Calu3 (cell line): ENCODE measurements at regions of chr14 and their contacts with region 1.

Region 1: DNA sequence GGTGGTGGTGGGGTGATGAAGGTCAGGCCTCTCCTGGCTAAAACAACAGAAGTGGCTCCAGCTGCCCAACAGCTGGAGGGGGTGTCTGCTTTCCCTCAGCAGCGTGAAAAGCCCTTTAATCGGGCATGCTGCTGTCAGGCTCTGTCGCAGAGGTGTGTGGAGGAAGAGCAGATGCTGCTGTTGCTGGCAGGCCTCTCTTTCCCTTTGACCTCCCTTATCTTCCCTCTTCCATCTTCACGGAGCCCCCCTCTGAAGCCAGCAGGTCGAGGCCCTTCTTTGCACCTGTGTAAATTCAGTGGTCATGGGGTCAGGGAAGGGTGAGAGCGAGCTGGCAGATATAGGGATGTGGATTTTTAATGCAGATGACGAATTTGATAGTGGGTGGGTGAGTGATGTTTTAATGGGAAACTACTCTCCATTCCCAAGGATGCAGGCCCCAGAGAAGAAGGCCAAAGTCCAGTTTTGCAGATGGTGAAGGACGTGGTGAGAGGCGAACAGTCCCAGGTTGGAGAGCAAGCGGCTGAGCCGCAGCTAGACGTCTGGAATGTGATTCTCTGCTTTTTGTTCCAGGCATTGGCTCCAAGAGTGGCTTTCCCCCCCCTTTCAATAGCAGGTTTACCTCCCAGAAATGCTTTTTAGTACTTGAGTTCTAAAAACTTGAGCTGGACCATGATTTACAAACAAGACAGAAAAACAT is 64.0 kb downstream of the SMOC1 start:
- DNase-seq: peak; percentile 9
- H3K4me3 Mint-ChIP-seq: peak overlapping the region; percentile 39
- H3K27ac Mint-ChIP-seq: peak overlapping the region; percentile 73
- H3K4me1 Mint-ChIP-seq: peaks cover 75% of the 10 kb centered on the region
- H3K27me3 Mint-ChIP-seq: no peaks in the 10 kb centered on the region
- CTCF ChIP-seq: no peak

Region 2: DNA sequence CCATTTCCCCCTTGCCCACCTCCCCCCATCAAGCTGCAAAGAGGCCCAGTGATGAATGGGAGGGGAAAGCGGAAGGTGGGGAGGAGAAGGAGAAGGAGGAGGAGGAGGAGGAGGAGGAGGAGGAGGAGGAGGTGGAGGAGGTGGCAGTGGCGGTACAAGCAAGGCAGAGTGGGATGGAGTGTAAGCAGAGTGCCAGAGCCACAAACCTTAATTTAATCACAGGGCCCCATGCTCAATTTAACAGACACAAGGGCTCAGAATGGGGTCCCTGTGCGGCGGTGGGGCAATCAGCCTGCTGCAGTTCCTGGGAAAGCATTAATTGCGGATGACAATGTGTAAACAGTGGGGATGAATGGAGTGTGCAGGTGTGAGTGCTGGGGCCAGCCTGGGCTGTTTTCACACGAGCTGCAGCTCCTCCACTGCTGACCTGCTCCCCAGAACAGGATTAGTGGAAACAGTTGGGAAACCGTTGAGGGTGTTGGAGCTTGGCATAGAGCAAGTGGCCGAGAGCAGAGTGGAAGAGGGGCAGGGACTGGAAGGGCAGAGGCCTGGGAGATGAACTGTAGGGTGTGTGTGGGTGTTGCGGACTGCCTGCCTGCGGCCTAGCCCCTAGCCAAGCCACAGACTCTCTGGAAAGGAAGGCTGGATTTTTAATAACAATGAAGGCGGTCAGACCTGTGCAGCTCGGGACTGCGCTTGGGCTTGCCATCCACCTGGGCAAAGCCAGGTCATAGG is 100.4 kb before region 1 on chr14:
- CTCF ChIA-PET with region 1: no interaction called
- intact Hi-C with region 1: no loop called
- DNase-seq: no peak
- H3K4me3 Mint-ChIP-seq: no peak overlapping the region
- H3K27ac Mint-ChIP-seq: no peak overlapping the region
- H3K4me1 Mint-ChIP-seq: no peaks in the 10 kb centered on the region
- H3K27me3 Mint-ChIP-seq: no peaks in the 10 kb centered on the region
- CTCF ChIP-seq: no peak

Region 3: GRCh38 chr14:69887740-69888657 is 55.2 kb before region 1 on chr14:
- CTCF ChIA-PET with region 1: no interaction called
- intact Hi-C with region 1: loop called (anchors 2 kb)
- DNase-seq: peak; percentile 36
- H3K4me3 Mint-ChIP-seq: peak overlapping the region; percentile 24
- H3K27ac Mint-ChIP-seq: peak overlapping the region; percentile 56
- H3K4me1 Mint-ChIP-seq: peaks cover 43% of the 10 kb centered on the region
- H3K27me3 Mint-ChIP-seq: no peaks in the 10 kb centered on the region
- CTCF ChIP-seq: no peak

Region 4: DNA sequence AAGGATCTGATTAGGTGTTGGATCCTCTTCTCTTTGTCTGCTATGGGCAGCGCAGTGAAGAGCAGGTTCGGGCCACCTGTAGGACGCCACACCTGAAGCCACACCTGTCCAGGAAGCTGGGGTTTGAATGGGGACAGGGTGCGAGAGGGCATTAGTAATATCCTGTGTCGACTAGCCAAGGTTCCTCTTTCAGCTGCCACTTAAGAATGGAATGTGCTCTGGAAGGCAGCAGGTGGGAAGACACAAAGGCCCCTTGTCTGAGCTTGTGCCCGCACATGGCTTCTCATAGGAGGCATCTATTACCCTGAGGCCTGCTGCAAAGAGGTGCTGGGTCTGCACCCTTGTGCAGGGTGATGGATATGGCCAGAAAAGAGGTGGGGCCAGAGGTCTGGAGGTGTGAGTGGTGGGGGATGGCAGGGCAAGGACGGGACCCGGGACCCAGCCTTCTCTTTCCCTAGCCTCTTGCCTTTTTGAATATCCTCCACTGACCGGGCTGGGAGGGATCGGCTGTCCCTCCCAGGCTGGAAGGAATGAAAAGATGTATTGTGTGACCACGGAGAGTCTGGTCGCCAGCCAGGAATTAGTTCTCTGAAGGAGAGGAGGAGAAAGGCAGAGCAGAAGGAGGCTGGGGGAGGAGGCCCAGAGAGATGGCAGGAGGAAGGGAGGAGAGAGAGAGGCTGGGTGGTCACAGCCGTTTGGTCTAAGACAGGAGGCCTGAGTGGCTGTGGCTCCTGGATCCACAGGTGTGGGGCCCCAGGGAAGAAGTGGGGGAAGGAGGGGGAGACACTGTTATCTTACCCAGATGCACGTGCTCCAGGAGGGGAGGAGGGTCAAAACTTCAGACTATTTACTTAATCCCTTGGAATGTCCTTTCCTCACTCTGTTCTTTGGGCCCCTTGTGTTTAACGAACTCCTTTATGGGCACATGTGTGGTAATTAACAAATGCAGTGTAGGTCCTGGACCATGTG is 37.5 kb after region 1 on chr14:
- CTCF ChIA-PET with region 1: interaction called, 3 read pairs
- intact Hi-C with region 1: loop called (anchors 2 kb)
- DNase-seq: peak; percentile 82
- H3K4me3 Mint-ChIP-seq: peak overlapping the region; percentile 44
- H3K27ac Mint-ChIP-seq: peak overlapping the region; percentile 95
- H3K4me1 Mint-ChIP-seq: peaks cover 70% of the 10 kb centered on the region
- H3K27me3 Mint-ChIP-seq: no peaks in the 10 kb centered on the region
- CTCF ChIP-seq: no peak